CD14-positive monocyte (primary cell): ENCODE measurements at regions of chr17 and their contacts with region 1.

Region 1: GRCh38 chr17:8248751-8249607 is at the start of gene PFAS:
- DNase-seq: peak; percentile 93 to 95 (median 95)
- H3K4me3 ChIP-seq: peak within 1 kb of the TSS; percentile 61 to 88 (median 61)
- H3K4me3 Mint-ChIP-seq: peak within 1 kb of the TSS; percentile 95 to 98
- H3K27ac ChIP-seq: peak within 1 kb of the TSS; percentile 94 to 95
- H3K27ac Mint-ChIP-seq: peak within 1 kb of the TSS; percentile 97 to 100 (median 99)
- H3K4me1 ChIP-seq: peaks cover 16 to 23% of the 10 kb centered on the region in 2 donors
- H3K4me1 Mint-ChIP-seq: peaks cover 32% of the 10 kb centered on the region
- H3K27me3 ChIP-seq: no peaks in the 10 kb centered on the region
- H3K27me3 Mint-ChIP-seq: no peaks in the 10 kb centered on the region
- CTCF ChIP-seq: no peak
- polyA plus RNA-seq, gene PFAS: 4.1 to 12.8 (median 4.4) TPM

Region 2: DNA sequence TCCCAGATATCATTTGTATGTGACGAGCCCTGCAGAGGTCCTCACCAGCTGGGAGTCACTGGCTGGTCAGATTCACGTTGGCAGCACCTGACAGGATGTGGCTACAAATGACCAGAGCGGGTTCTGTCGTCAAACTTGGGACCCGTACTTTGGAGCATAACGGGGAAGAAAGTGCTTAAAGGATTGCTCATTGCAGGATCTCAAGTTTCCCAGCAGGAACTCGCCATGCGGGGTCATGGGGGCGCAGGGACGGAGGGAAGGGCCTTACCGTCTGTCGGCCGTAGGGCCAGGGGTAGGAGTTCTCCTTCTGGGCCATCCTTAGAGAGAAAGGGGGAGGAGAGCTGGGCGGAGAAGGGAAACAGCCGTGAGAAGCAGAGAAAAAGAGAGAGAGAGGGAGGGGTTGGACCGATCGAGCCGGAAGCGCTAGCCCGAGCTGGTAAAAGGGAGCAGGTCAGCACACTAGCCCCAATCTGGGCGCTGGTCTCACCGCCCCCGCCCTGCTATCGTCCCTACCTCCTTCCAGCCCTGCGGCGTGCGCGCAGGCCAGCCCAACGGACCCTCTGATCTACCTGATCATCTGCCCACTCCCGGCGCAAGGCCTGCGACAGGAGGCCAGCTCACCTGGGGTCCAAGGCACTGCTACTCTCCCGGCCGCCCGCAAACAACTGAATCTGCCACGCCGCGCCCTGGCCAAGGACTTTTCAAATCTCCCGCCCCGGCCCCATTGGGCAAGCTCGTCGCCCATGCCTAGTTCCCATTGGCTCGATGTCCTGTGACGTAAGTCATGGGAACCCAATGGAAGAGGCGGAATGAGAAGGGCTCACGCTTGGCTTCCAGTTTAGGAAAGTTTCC is 38.8 kb before region 1 on chr17 and contains the start of gene AURKB:
- intact Hi-C with region 1: loop called (anchors 5 kb)
- DNase-seq: peak; percentile 90 to 98 (median 96)
- H3K4me3 ChIP-seq: peak within 1 kb of the TSS; percentile 66 to 86 (median 84)
- H3K4me3 Mint-ChIP-seq: peak within 1 kb of the TSS; percentile 92 to 95
- H3K27ac ChIP-seq: peak within 1 kb of the TSS; percentile 69 to 80
- H3K27ac Mint-ChIP-seq: peak within 1 kb of the TSS; percentile 90 to 96 (median 94)
- H3K4me1 ChIP-seq: peaks cover 28 to 40% of the 10 kb centered on the region in 2 donors
- H3K4me1 Mint-ChIP-seq: peaks cover 35% of the 10 kb centered on the region
- H3K27me3 ChIP-seq: no peaks in the 10 kb centered on the region
- H3K27me3 Mint-ChIP-seq: no peaks in the 10 kb centered on the region
- CTCF ChIP-seq: no peak
- polyA plus RNA-seq, gene AURKB: 0.38 to 4.2 (median 0.79) TPM

Region 3: DNA sequence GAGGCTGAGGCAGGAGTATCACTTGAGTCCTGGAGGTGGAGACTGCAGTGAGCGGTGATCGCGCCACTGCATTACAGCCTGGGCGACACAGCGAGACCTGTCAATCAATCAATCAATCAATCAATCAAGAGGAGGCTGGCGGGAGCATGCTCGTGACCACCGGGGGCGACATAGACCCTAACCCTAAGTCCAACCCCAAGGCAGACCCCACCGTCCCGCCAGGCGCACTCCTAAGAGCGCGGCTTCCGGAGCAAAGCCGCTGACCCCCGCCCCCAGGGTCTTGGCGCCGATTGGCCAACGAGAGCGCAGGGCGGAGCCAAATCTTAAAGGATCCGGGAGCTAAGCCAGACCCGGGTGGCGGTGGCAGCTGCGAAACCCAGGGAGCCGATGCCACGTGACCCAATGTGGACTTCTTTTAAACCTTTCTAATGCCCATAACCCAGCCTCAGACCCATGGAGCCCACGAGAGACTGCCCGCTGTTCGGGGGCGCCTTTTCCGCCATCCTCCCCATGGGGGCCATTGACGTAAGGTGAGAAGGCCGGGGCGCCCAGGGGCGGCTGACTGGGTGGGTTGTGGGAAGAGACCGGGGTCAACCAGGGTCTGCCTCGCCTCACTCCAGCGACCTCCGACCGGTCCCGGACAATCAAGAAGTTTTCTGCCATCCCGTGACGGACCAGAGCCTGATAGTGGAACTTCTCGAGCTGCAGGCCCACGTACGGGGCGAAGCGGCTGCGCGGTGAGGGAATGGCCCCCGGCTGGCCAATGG is 39.5 kb after region 1 on chr17 and contains the start of gene RANGRF:
- intact Hi-C with region 1: loop called (anchors 2 to 5 kb)
- DNase-seq: peak; percentile 72 to 81 (median 75)
- H3K4me3 ChIP-seq: peak within 1 kb of the TSS; percentile 76 to 90 (median 84)
- H3K4me3 Mint-ChIP-seq: peak within 1 kb of the TSS; percentile 93 to 96
- H3K27ac ChIP-seq: peak within 1 kb of the TSS; percentile 77 to 84
- H3K27ac Mint-ChIP-seq: peak within 1 kb of the TSS; percentile 89 to 97 (median 95)
- H3K4me1 ChIP-seq: peaks cover 31 to 44% of the 10 kb centered on the region in 2 donors
- H3K4me1 Mint-ChIP-seq: peaks cover 47% of the 10 kb centered on the region
- H3K27me3 ChIP-seq: no peaks in the 10 kb centered on the region
- H3K27me3 Mint-ChIP-seq: peaks cover 0 to 1% (median 0%) of the 10 kb centered on the region in 3 donors
- CTCF ChIP-seq: no peak
- polyA plus RNA-seq, gene RANGRF: 27.3 to 34.3 (median 31.7) TPM